CD4-positive, alpha-beta memory T cell (primary cell): ENCODE measurements at regions of chr2 and their contacts with region 1.

Region 1: DNA sequence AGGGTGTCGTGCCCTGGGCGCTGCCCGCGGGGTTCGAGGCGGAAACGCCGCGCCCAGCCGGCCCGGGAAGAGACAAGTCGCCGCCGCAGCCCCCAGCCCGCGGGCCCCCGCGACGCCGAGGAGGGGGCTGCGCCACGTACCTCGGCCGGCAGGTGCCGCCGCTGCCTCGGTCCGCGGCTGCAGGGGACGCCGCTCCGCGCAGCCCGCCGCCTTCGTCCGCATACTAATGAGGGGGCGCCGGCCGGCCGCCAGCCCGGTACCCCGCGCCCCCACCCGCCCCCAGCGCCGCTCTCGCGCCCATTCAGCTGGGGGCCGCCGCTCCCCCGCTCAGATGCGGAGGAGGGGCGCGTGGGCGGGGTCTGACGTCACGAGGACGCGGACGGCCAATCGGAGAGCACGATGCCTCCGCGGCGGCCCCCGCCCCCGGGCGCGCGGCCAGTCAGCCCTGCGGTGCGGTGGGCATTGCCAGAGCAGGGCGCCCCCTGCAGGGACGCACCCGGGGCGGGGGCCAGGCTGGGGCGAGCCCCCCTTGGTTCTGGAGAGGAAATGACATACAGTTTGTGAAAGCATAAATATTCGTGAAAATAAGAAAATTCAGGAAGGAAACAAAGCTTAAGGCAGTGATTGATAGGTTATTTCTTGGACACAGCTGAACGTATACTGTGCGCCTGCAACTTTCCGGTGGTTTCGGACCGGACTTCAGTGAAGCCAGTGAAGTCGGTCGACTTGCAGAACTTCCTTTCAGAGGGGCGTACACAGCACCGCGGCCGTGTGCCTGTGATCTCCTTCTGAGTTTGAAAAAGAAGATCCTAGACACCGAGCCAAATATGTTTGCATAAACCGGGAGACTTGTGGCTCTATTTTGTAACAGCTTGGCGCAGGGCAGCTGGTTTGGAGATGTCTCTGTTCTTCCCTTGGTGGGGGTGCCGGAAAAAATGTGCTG is at the start of gene ST3GAL5:
- DNase-seq: peak; percentile 89 to 94 (median 92)
- H3K4me3 ChIP-seq: peak within 1 kb of the TSS; percentile 87 to 96
- H3K4me3 Mint-ChIP-seq: peak within 1 kb of the TSS; percentile 94 to 98 (median 94)
- H3K27ac ChIP-seq: peak within 1 kb of the TSS; percentile 69
- H3K27ac Mint-ChIP-seq: peak within 1 kb of the TSS; percentile 94 to 99 (median 96)
- H3K4me1 ChIP-seq: peaks cover 48% of the 10 kb centered on the region
- H3K4me1 Mint-ChIP-seq: peaks cover 43 to 78% (median 58%) of the 10 kb centered on the region in 4 donors
- H3K27me3 ChIP-seq: no peaks in the 10 kb centered on the region
- H3K27me3 Mint-ChIP-seq: no peaks in the 10 kb centered on the region
- total RNA-seq, gene ST3GAL5: 37.1 to 41.7 TPM

Region 2: GRCh38 chr2:85628658-85629057 is 260.3 kb before region 1 on chr2:
- CTCF ChIA-PET with region 1: no interaction called
- POLR2A ChIA-PET with region 1: no interaction called
- intact Hi-C with region 1: no loop called
- DNase-seq: no peak
- H3K4me3 ChIP-seq: no peak overlapping the region
- H3K4me3 Mint-ChIP-seq: no peak overlapping the region
- H3K27ac ChIP-seq: no peak overlapping the region
- H3K27ac Mint-ChIP-seq: peak overlapping the region in 2 of 7 donors; percentile 4 to 46
- H3K4me1 ChIP-seq: peaks cover 6% of the 10 kb centered on the region
- H3K4me1 Mint-ChIP-seq: peaks cover 0 to 12% (median 3%) of the 10 kb centered on the region in 4 donors
- H3K27me3 ChIP-seq: no peaks in the 10 kb centered on the region
- H3K27me3 Mint-ChIP-seq: no peaks in the 10 kb centered on the region

Region 3: GRCh38 chr2:85843543-85843942 is 45.4 kb before region 1 on chr2:
- CTCF ChIA-PET with region 1: interaction called, 10 read pairs
- POLR2A ChIA-PET with region 1: interaction called, 10 read pairs
- intact Hi-C with region 1: no loop called
- DNase-seq: peak in 1 of 5 donors; percentile 43
- H3K4me3 ChIP-seq: no peak overlapping the region
- H3K4me3 Mint-ChIP-seq: no peak overlapping the region
- H3K27ac ChIP-seq: no peak overlapping the region
- H3K27ac Mint-ChIP-seq: peak overlapping the region in 2 of 7 donors; percentile 44 to 64
- H3K4me1 ChIP-seq: peaks cover 20% of the 10 kb centered on the region
- H3K4me1 Mint-ChIP-seq: peaks cover 12 to 38% (median 21%) of the 10 kb centered on the region in 4 donors
- H3K27me3 ChIP-seq: no peaks in the 10 kb centered on the region
- H3K27me3 Mint-ChIP-seq: no peaks in the 10 kb centered on the region

Region 4: DNA sequence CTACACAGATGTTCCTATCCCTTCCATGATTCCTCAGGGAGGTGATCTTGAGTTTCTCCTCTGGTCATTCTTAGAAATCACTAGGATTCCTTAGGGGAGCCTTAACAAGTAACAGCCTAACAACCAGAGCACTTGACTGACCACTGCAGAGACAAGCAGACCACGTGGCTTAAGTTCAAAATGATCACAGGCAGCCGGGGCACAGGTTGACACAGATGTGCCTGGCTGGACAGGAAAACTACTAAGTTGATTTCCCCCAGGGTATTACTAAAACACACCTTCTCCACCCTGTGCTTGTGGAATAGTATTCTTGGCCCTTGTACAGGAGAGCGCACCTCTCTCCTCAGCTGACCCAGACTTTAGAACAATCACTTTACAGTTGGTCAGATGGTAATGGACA is 30.1 kb before region 1 on chr2:
- CTCF ChIA-PET with region 1: interaction called, 96 read pairs
- POLR2A ChIA-PET with region 1: interaction called, 140 read pairs
- intact Hi-C with region 1: no loop called
- DNase-seq: no peak
- H3K4me3 ChIP-seq: no peak overlapping the region
- H3K4me3 Mint-ChIP-seq: no peak overlapping the region
- H3K27ac ChIP-seq: no peak overlapping the region
- H3K27ac Mint-ChIP-seq: peak overlapping the region in 6 of 7 donors; percentile 6 to 83 (median 42)
- H3K4me1 ChIP-seq: peaks cover 55% of the 10 kb centered on the region
- H3K4me1 Mint-ChIP-seq: peaks cover 50 to 87% (median 66%) of the 10 kb centered on the region in 4 donors
- H3K27me3 ChIP-seq: no peaks in the 10 kb centered on the region
- H3K27me3 Mint-ChIP-seq: no peaks in the 10 kb centered on the region

Region 5: GRCh38 chr2:85873679-85874078 is 15.3 kb before region 1 on chr2:
- CTCF ChIA-PET with region 1: interaction called, 76 read pairs
- POLR2A ChIA-PET with region 1: interaction called, 21 read pairs
- intact Hi-C with region 1: loop called (anchors 1 kb)
- DNase-seq: no peak
- H3K4me3 ChIP-seq: no peak overlapping the region
- H3K4me3 Mint-ChIP-seq: no peak overlapping the region
- H3K27ac ChIP-seq: no peak overlapping the region
- H3K27ac Mint-ChIP-seq: peak overlapping the region in 4 of 7 donors; percentile 31 to 78 (median 55)
- H3K4me1 ChIP-seq: peaks cover 6% of the 10 kb centered on the region
- H3K4me1 Mint-ChIP-seq: peaks cover 35 to 80% (median 61%) of the 10 kb centered on the region in 4 donors
- H3K27me3 ChIP-seq: no peaks in the 10 kb centered on the region
- H3K27me3 Mint-ChIP-seq: no peaks in the 10 kb centered on the region

Region 6: GRCh38 chr2:85900366-85900765 is 11.4 kb after region 1 on chr2:
- CTCF ChIA-PET with region 1: interaction called, 26 read pairs
- POLR2A ChIA-PET with region 1: interaction called, 23 read pairs
- intact Hi-C with region 1: no loop called
- DNase-seq: peak in 3 of 5 donors; percentile 8 to 19 (median 16)
- H3K4me3 ChIP-seq: no peak overlapping the region
- H3K4me3 Mint-ChIP-seq: peak overlapping the region in 1 of 8 donors; percentile 15
- H3K27ac ChIP-seq: no peak overlapping the region
- H3K27ac Mint-ChIP-seq: peak overlapping the region in 6 of 7 donors; percentile 22 to 62 (median 44)
- H3K4me1 ChIP-seq: peaks cover 16% of the 10 kb centered on the region
- H3K4me1 Mint-ChIP-seq: peaks cover 5 to 30% (median 17%) of the 10 kb centered on the region in 4 donors
- H3K27me3 ChIP-seq: no peaks in the 10 kb centered on the region
- H3K27me3 Mint-ChIP-seq: no peaks in the 10 kb centered on the region

Region 7: DNA sequence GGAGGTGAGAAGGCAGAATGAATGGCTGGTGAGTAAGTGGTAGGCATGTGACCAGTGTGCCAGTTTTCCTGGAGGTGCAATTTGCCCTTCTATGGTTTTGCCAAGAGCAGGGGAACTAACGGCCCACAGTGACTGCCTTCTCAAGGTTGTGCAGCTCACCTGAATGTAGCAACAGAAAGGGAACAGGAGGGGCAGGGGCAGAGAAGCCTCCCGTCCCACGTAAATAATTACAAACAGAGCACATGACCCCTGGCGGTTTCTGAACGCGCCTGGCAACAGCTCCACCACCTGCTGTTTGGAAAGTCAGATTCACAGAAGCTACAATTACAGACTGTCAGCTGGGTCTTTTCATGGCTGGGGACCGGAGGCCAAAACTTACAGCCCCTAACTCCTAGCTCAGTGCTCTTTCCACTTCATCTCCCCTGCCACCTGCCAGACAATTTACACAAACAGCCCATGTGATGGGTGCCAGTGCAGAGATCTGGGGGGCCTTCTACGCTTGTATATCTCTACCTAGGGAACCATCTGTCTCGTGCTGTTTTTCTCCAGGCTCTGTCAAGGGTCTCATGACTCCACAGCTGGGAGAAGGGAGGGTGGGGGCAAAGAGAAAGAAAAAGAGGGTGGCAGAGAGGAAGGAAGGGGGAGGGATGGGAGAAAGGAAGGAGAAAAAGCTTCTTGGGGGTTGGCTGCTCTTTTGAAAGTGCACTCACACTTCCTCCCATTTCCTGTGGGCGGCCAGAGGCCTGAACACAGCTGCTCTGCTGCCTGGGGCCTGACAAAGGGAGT is 147.1 kb after region 1 on chr2:
- CTCF ChIA-PET with region 1: interaction called, 129 read pairs
- POLR2A ChIA-PET with region 1: interaction called, 81 read pairs
- intact Hi-C with region 1: loop called (anchors 1 kb)
- DNase-seq: peak; percentile 79 to 88 (median 84)
- H3K4me3 ChIP-seq: peak overlapping the region; percentile 28 to 37
- H3K4me3 Mint-ChIP-seq: peak overlapping the region; percentile 74 to 87 (median 84)
- H3K27ac ChIP-seq: peak overlapping the region; percentile 82
- H3K27ac Mint-ChIP-seq: peak overlapping the region; percentile 96 to 100 (median 100)
- H3K4me1 ChIP-seq: peaks cover 81% of the 10 kb centered on the region
- H3K4me1 Mint-ChIP-seq: peaks cover 56 to 82% (median 68%) of the 10 kb centered on the region in 4 donors
- H3K27me3 ChIP-seq: no peaks in the 10 kb centered on the region
- H3K27me3 Mint-ChIP-seq: peaks cover 0 to 2% of the 10 kb centered on the region in 2 donors

Region 8: GRCh38 chr2:86079981-86080911 is 191.3 kb after region 1 on chr2:
- CTCF ChIA-PET with region 1: interaction called, 199 read pairs
- POLR2A ChIA-PET with region 1: interaction called, 60 read pairs
- intact Hi-C with region 1: loop called (anchors 1 kb)
- DNase-seq: peak; percentile 79 to 87 (median 82)
- H3K4me3 ChIP-seq: no peak overlapping the region
- H3K4me3 Mint-ChIP-seq: peak overlapping the region in 7 of 8 donors; percentile 18 to 74 (median 57)
- H3K27ac ChIP-seq: peak overlapping the region; percentile 64
- H3K27ac Mint-ChIP-seq: peak overlapping the region; percentile 85 to 96 (median 95)
- H3K4me1 ChIP-seq: peaks cover 21% of the 10 kb centered on the region
- H3K4me1 Mint-ChIP-seq: peaks cover 15 to 54% (median 37%) of the 10 kb centered on the region in 4 donors
- H3K27me3 ChIP-seq: no peaks in the 10 kb centered on the region
- H3K27me3 Mint-ChIP-seq: no peaks in the 10 kb centered on the region

Region 9: DNA sequence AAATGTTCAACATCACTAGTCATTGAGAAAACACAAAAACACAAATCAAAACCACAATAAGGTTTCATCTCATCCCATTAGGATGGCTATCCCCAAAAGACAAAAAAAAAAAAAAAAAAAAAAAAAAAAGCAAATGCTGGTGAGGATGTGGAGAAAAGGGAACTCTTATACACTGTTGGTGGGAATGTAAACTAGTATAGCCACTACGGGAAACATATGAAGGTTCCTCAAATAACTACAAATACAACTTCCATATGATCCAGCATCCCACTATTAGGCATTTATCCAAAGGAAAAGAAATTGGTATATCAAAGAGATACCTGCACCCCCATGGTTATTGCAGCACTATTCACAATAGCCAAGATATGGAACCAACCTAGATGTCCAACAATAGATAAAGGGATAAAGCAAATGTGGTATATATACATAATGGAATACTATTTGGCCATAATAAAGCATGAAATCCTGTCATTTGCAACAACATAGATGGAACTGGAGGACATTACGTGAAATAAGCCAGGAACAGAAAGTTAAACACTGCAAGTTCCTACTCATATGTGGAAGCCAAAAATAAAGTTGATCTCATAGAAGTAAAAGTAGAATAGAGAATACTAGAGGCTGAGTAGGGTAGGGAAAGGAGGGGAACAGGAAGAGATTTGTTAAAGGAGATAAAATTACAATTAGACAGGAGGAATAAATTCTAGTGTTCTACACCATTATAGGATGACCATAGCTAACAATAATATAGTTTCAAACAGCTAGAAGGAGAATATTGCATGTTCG is 208.3 kb after region 1 on chr2:
- CTCF ChIA-PET with region 1: no interaction called
- POLR2A ChIA-PET with region 1: no interaction called
- intact Hi-C with region 1: no loop called
- DNase-seq: no peak
- H3K4me3 ChIP-seq: no peak overlapping the region
- H3K4me3 Mint-ChIP-seq: no peak overlapping the region
- H3K27ac ChIP-seq: no peak overlapping the region
- H3K27ac Mint-ChIP-seq: peak overlapping the region in 3 of 7 donors; percentile 6 to 82 (median 64)
- H3K4me1 ChIP-seq: no peaks in the 10 kb centered on the region
- H3K4me1 Mint-ChIP-seq: peaks cover 12 to 21% (median 16%) of the 10 kb centered on the region in 4 donors
- H3K27me3 ChIP-seq: no peaks in the 10 kb centered on the region
- H3K27me3 Mint-ChIP-seq: no peaks in the 10 kb centered on the region

Region 10: DNA sequence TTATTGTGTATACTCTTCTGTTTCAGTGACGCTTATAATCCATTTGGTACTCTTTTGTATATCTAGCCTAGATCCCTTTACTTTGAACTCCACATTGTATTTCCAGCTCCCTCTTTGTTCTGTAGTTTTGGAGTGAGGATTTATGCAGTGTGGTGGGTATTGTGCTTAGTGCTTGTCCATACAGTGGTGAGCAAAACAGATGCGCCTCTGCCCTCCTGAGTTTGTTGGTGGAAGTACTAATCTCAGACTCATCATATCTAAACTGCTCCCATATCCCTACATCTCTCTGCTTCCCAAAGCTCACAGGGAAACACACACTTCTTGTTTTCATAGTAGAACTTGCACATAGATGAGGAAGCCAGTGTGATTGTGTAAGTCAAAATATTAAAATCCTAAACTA is 229.2 kb after region 1 on chr2:
- CTCF ChIA-PET with region 1: no interaction called
- POLR2A ChIA-PET with region 1: no interaction called
- intact Hi-C with region 1: no loop called
- DNase-seq: no peak
- H3K4me3 ChIP-seq: no peak overlapping the region
- H3K4me3 Mint-ChIP-seq: no peak overlapping the region
- H3K27ac ChIP-seq: no peak overlapping the region
- H3K27ac Mint-ChIP-seq: no peak overlapping the region
- H3K4me1 ChIP-seq: no peaks in the 10 kb centered on the region
- H3K4me1 Mint-ChIP-seq: peaks cover under 1 to 11% (median 6%) of the 10 kb centered on the region in 4 donors
- H3K27me3 ChIP-seq: no peaks in the 10 kb centered on the region
- H3K27me3 Mint-ChIP-seq: no peaks in the 10 kb centered on the region